ENCODE measurements at regions of chr3 and their contacts with region 1.

Region 1: GRCh38 chr3:112128843-112129727 is 4.0 kb downstream of the GCSAM start:
- DNase-seq: peak; percentile 73
- H3K4me3 Mint-ChIP-seq: peak overlapping the region; percentile 30
- H3K27ac Mint-ChIP-seq: peak overlapping the region; percentile 88
- H3K4me1 Mint-ChIP-seq: peaks cover 82% of the 10 kb centered on the region
- H3K27me3 Mint-ChIP-seq: no peaks in the 10 kb centered on the region

Region 2: DNA sequence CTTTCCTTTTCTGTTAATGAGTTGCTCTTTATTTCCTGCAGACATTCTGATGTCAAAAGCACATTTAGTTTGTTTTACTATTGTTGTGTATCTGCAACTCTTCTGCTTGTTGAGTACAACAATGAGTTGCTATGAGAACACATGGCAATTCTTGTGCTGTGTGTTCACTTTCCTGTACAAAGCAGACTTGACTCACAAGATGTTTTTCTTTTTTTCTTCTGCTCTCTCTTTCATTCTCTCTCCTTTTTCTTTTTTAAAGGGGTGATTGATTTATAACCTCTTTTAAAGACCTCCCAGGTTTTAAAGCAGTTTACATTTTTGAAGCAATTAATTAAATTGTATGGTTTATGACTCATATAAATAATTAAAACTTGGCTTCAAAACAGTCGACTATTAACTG is 181.9 kb before region 1 on chr3:
- CTCF ChIA-PET with region 1: no interaction called
- POLR2A ChIA-PET with region 1: no interaction called
- intact Hi-C with region 1: no loop called
- DNase-seq: no peak
- H3K4me3 Mint-ChIP-seq: no peak overlapping the region
- H3K27ac Mint-ChIP-seq: no peak overlapping the region
- H3K4me1 Mint-ChIP-seq: no peaks in the 10 kb centered on the region
- H3K27me3 Mint-ChIP-seq: no peaks in the 10 kb centered on the region

Region 3: DNA sequence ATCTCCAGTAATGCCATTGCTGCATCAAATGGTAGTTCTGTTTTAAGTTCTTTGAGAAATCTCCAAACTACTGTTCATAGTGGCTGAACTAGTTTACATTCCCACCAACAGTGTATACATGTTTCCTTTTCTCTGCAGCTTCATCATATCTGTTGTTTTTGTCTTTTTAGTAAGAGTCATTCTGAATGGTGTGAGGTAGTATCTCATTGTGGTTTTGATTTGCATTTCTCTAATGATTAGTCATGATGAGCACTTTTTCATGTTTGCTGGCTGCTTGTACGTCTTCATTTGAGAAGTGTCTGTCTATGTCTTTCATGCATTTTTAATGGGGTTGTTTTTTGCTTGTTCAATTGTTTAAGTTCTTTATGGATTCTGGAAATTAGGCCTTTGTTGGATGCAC is 14.2 kb after region 1 on chr3:
- CTCF ChIA-PET with region 1: interaction called, 18 read pairs
- POLR2A ChIA-PET with region 1: interaction called, 3 read pairs
- intact Hi-C with region 1: loop called (anchors 1 kb)
- DNase-seq: no peak
- H3K4me3 Mint-ChIP-seq: peak overlapping the region; percentile 53
- H3K27ac Mint-ChIP-seq: peak overlapping the region; percentile 77
- H3K4me1 Mint-ChIP-seq: peaks cover 30% of the 10 kb centered on the region
- H3K27me3 Mint-ChIP-seq: no peaks in the 10 kb centered on the region

Region 4: GRCh38 chr3:112303764-112304325 is 174.8 kb after region 1 on chr3:
- CTCF ChIA-PET with region 1: no interaction called
- POLR2A ChIA-PET with region 1: no interaction called
- intact Hi-C with region 1: loop called (anchors 5 kb)
- DNase-seq: no peak
- H3K4me3 Mint-ChIP-seq: no peak overlapping the region
- H3K27ac Mint-ChIP-seq: no peak overlapping the region
- H3K4me1 Mint-ChIP-seq: peaks cover under 1% of the 10 kb centered on the region
- H3K27me3 Mint-ChIP-seq: no peaks in the 10 kb centered on the region

Region 5: GRCh38 chr3:113194823-113195401 is 1065.8 kb after region 1 on chr3:
- CTCF ChIA-PET with region 1: no interaction called
- POLR2A ChIA-PET with region 1: no interaction called
- intact Hi-C with region 1: no loop called
- DNase-seq: no peak
- H3K4me3 Mint-ChIP-seq: no peak overlapping the region
- H3K27ac Mint-ChIP-seq: no peak overlapping the region
- H3K4me1 Mint-ChIP-seq: no peaks in the 10 kb centered on the region
- H3K27me3 Mint-ChIP-seq: no peaks in the 10 kb centered on the region